Activated CD4-positive, alpha-beta T cell treated with anti-CD3 and anti-CD28 coated beads for 36 hours (primary cell): ENCODE measurements at regions of chr3 and their contacts with region 1.

Region 1: DNA sequence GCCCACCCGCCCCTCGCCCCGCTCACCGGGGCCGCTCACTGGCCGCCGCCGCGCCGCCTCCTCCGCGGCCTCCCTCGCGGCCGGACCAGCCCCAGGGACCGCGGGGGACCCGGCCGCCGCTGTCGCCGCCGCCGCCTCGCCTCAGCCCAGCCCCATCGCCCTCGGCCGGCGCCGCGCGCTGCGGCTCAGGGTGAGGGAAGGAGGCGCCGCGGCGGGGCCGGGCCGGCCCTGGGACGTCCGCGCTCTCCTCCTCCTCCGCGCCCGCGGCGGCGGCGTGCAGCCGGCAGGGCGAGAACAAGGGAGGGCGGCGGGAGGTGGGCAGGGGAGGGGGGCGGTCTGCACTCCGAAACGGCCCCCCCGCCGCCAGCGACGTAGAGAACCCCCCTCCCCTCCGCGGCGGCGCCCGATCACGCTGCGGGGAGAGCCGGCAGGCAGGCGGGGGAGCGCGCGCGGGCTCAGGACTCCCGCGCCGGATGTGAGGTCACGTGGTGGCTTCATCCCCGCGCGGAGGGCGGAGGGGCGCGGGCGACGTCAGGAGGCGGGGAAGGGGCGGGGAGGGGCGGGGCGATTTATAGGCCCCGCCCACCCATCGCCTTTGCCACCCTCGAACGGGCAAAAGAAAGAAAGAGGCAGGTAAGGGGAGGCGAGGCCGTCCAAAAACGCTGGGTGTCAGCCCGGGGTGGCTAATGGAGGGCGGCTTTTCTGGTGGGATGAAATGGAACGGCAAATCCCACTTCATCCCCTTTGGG is at the start of gene ATP13A3:
- DNase-seq: peak; percentile 94
- ATAC-seq: peak; percentile 75
- H3K4me3 Mint-ChIP-seq: peak within 1 kb of the TSS; percentile 95
- H3K27ac Mint-ChIP-seq: peak within 1 kb of the TSS; percentile 93
- H3K4me1 Mint-ChIP-seq: peaks cover 54% of the 10 kb centered on the region
- H3K27me3 Mint-ChIP-seq: peaks cover 2% of the 10 kb centered on the region
- total RNA-seq, gene ATP13A3: 61.4 to 107 TPM

Region 2: GRCh38 chr3:194472290-194472920 is 14.3 kb before region 1 on chr3:
- CTCF ChIA-PET with region 1: interaction called, 48 read pairs
- POLR2A ChIA-PET with region 1: interaction called, 3 read pairs
- intact Hi-C with region 1: no loop called
- DNase-seq: no peak
- ATAC-seq: peak; percentile 88
- H3K4me3 Mint-ChIP-seq: no peak overlapping the region
- H3K27ac Mint-ChIP-seq: no peak overlapping the region
- H3K4me1 Mint-ChIP-seq: peaks cover 23% of the 10 kb centered on the region
- H3K27me3 Mint-ChIP-seq: no peaks in the 10 kb centered on the region

Region 3: DNA sequence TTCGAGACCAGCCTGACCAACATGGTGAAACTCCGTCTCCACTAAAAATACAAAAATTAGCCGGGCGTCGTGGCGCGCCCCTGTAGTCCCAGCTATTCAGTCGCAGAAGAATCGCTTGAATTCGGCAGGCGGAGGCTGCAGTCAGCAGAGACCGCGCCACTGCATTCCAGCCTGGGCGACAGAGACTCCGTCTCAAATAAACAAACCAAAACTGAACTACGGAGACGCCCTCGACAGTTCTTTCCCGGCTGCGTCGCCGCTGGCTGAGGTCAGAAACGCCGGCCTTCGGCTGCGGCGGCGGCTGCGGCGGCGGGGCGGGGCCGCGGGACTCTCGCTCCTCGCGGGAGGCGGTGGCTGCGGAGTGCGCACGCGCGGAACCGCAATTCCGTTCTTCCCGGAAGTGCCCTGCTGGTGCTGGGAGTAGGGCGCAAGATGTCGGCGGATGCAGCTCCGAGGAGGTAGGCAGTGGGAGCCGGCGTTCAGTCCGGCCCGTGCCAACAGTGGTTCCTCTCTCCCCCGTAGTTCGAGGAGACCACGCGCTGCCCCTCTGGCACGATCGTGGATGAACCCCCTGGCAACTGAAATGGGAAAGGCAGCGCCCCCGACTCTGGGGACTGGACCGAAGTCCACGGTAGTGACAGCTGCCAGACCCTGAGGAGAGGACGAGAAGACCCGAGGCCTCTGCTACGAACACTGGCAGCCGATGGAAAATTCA is 97.0 kb after region 1 on chr3:
- CTCF ChIA-PET with region 1: interaction called, 8 read pairs
- POLR2A ChIA-PET with region 1: interaction called, 3 read pairs
- intact Hi-C with region 1: loop called (anchors 1 to 2 kb)
- DNase-seq: peak; percentile 96
- ATAC-seq: peak; percentile 88
- H3K4me3 Mint-ChIP-seq: peak overlapping the region; percentile 93
- H3K27ac Mint-ChIP-seq: peak overlapping the region; percentile 97
- H3K4me1 Mint-ChIP-seq: peaks cover 25% of the 10 kb centered on the region
- H3K27me3 Mint-ChIP-seq: no peaks in the 10 kb centered on the region

Region 4: DNA sequence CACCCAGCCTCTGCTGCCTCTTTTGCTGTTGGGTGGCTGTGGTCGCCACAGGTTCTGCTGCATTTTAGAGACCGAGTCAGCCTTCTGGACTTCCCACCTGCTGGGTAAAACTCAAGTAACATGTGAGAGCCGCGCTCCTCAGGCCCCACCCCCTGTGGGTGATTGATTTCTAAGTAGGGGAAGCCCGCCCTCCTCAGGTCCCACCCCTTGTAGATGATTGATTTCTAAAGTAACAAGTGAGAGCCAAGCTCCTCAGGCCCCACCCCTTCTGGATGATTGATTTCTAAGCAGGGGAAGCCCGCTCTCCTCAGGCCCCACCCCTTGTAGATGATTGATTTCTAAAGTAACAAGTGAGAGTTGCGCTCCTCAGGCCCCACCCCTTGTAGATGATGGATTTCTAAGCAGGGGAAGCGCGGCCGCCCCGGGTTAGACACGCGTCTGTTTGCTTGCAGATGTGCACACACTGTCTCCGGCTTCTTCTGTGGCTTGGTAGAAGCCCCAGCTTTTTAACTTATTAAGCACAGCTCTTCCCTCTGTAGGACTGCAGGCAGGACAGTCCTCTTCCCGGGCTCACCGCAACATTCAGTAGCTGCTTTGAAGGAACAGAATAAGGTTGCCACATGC is 282.4 kb after region 1 on chr3:
- CTCF ChIA-PET with region 1: no interaction called
- POLR2A ChIA-PET with region 1: no interaction called
- intact Hi-C with region 1: loop called in 1 of 2 experiments (anchors 1 kb)
- DNase-seq: peak; percentile 96
- ATAC-seq: peak; percentile 99
- H3K4me3 Mint-ChIP-seq: peak overlapping the region; percentile 76
- H3K27ac Mint-ChIP-seq: peak overlapping the region; percentile 91
- H3K4me1 Mint-ChIP-seq: peaks cover 17% of the 10 kb centered on the region
- H3K27me3 Mint-ChIP-seq: peaks cover 9% of the 10 kb centered on the region

Region 5: DNA sequence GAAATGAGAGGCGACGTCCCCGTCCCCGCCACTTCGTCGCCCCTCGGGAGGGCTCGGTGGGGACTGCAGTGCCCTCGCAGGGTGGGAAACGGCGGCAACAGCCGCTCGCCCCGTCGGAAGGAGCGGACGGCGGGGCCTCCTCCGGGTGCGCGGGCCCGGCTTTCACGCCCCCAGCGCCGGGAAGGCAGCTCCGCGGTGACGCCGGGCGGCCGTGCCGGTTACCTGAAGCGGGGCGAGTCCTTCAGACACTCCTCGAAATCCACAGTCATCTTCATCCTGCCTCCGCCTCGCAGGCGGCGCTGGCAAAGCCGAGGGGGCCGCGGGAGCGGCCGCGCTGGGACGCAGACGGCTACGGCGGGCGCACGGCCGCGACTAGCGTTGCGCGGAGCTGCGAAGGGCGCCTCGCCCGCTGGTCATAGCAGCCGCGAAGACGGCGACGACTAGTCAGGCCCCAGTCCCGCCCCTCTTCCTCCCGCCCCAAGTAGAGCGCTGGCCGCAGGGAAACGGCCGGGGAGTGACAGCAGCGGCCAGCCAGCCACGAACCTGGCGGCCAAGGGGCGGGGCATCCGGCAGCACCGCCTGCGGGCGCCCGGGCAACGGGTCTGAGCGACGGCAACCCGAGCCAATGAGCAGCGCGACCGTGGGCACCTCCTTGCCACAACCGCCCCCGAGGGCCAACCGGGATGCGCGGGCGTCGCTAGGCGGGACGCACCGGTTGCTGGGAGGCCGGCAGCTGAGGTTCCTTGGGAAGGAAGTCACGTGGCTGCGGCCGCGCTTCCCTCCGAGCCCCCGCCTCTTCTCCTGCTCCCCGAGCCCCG is 956.1 kb after region 1 on chr3 and contains the start of gene ACAP2:
- CTCF ChIA-PET with region 1: no interaction called
- POLR2A ChIA-PET with region 1: no interaction called
- intact Hi-C with region 1: loop called in 1 of 2 experiments (anchors 1 kb)
- DNase-seq: peak; percentile 99
- ATAC-seq: peak; percentile 96
- H3K4me3 Mint-ChIP-seq: peak within 1 kb of the TSS; percentile 96
- H3K27ac Mint-ChIP-seq: peak within 1 kb of the TSS; percentile 91
- H3K4me1 Mint-ChIP-seq: peaks cover 44% of the 10 kb centered on the region
- H3K27me3 Mint-ChIP-seq: no peaks in the 10 kb centered on the region
- total RNA-seq, gene ACAP2: 43.7 to 51.9 TPM